ENCODE measurements at regions of chr10 and their contacts with region 1.

Region 1: GRCh38 chr10:101782811-101783735 is at the start of gene NPM3:
- DNase-seq: peak; percentile 56 to 66
- H3K4me3 ChIP-seq: peak within 1 kb of the TSS; percentile 88
- H3K27ac ChIP-seq: no peak within 1 kb of the TSS
- H3K4me1 ChIP-seq: peaks cover 11% of the 10 kb centered on the region; the same call in 1 of the 2 replicates
- H3K27me3 ChIP-seq: no peaks in the 10 kb centered on the region
- CTCF ChIP-seq: no peak
- total RNA-seq, gene NPM3: 36.1 and 43.6 TPM in 2 replicates

Region 2: DNA sequence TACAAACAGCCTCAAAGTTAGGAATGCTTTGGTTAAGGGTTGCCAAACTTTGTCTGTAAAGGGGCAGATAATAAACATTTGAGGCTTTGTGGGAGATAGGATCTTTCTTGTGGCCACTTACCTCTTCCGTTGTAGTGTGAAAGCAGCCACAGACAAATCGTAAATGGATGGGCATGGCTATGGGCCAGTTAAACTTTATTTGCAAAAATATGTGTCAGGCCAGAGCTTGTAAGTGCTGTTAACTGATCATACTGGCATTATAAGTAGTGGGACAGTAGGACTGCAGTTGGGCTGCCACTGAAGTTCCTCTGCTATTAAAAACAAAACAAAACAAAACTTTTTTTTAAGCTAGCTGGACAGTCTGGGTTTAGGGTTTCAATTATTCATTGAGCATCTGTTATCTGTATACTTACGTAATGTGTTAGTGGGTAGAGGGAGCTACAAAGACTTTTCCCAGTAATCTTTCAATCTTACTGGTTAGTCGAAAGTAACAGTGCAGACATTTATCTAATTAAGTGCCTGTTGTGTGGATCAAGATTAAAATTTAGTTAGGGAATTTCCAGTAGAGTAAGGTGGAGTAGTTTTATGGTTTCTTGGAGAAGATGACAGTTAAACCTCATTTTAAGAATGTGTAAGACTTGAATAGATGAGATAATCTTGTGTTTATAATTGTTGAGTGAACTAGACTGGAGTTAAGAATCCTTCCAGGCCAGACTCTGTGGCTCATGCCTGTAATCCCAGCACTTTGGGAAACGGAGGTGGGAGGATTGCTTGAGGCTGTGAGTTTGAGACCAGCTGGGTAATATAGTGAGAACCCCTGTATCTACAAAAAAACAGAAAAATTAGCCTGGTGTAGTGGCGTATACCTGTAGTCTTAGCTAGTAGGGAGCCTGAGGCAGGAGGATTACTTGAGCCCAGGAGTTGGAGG is 329.0 kb before region 1 on chr10:
- CTCF ChIA-PET with region 1: no interaction called
- POLR2A ChIA-PET with region 1: interaction called, 3 read pairs
- intact Hi-C with region 1: loop called (anchors 10 kb)
- DNase-seq: no peak
- H3K4me3 ChIP-seq: no peak overlapping the region
- H3K27ac ChIP-seq: no peak overlapping the region
- H3K4me1 ChIP-seq: no peaks in the 10 kb centered on the region
- H3K27me3 ChIP-seq: no peaks in the 10 kb centered on the region
- CTCF ChIP-seq: no peak

Region 3: DNA sequence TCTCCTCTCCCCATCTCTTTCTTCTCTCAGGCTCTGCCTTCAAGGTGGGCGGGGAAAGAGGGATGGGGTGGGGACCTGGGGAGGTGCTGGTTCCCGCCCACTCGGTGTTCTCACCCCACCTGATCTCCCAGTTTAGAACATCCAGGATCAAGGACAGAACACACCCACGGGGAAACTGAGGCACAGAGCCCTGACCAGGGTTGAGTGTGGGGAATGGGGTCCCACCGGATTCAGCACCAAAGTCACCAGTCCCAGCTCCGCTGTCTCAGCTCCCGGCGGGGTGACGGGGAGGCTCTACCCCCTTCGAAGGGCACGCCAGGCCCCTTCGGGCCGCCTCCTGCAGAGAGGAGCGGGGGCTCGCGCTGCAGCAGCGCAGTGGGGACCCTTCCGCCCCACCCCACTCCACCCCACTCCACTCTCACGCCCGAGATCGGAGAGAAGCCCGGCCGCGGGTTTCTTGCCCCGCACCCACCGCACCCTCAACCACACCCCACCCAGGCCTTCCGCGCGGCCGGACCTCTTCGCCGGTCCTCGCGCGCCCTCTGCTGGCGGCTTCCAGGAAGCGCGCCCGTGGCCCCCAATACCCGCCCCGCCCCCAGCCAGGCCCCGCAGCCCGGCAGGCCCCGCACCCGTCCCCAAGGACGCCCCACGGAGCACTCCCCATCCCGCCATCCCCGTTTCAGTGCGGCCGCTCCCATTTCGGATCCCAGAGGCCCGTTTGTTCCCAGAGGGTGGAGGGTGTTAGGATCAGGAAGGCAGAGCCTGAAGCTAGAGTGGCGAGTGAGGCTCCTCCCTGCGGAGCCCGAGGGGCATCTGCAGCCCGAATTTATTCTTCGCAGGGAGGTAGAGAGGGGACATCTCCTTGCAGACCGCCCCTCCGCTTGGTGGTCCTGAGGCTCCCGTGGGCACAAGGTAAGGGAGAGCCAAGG is 213.0 kb before region 1 on chr10:
- CTCF ChIA-PET with region 1: interaction called, 14 read pairs
- POLR2A ChIA-PET with region 1: no interaction called
- intact Hi-C with region 1: no loop called
- DNase-seq: peak in 1 of 2 experiments; percentile 58
- H3K4me3 ChIP-seq: peak overlapping the region; percentile 68
- H3K27ac ChIP-seq: no peak overlapping the region
- H3K4me1 ChIP-seq: no peaks in the 10 kb centered on the region
- H3K27me3 ChIP-seq: peaks cover 15% of the 10 kb centered on the region
- CTCF ChIP-seq: peak; percentile 78

Region 4: GRCh38 chr10:101576211-101576863 is 206.7 kb before region 1 on chr10:
- CTCF ChIA-PET with region 1: interaction called, 10 read pairs
- POLR2A ChIA-PET with region 1: no interaction called
- intact Hi-C with region 1: no loop called
- DNase-seq: peak in 1 of 2 experiments; percentile 36
- H3K4me3 ChIP-seq: no peak overlapping the region
- H3K27ac ChIP-seq: no peak overlapping the region
- H3K4me1 ChIP-seq: no peaks in the 10 kb centered on the region
- H3K27me3 ChIP-seq: no peaks in the 10 kb centered on the region
- CTCF ChIP-seq: no peak

Region 5: GRCh38 chr10:101602761-101603398 is 180.2 kb before region 1 on chr10:
- CTCF ChIA-PET with region 1: interaction called, 19 read pairs
- POLR2A ChIA-PET with region 1: interaction called, 3 read pairs
- intact Hi-C with region 1: loop called (anchors 1 kb)
- DNase-seq: peak; percentile 58 to 69
- H3K4me3 ChIP-seq: no peak overlapping the region
- H3K27ac ChIP-seq: no peak overlapping the region
- H3K4me1 ChIP-seq: no peaks in the 10 kb centered on the region
- H3K27me3 ChIP-seq: no peaks in the 10 kb centered on the region
- CTCF ChIP-seq: peak; percentile 82

Region 6: GRCh38 chr10:101693978-101694673 is 88.9 kb before region 1 on chr10:
- CTCF ChIA-PET with region 1: no interaction called
- POLR2A ChIA-PET with region 1: no interaction called
- intact Hi-C with region 1: loop called (anchors 10 kb)
- DNase-seq: peak in 1 of 2 experiments; percentile 48
- H3K4me3 ChIP-seq: peak overlapping the region; percentile 90
- H3K27ac ChIP-seq: peak overlapping the region; percentile 74
- H3K4me1 ChIP-seq: peaks cover 19% of the 10 kb centered on the region
- H3K27me3 ChIP-seq: no peaks in the 10 kb centered on the region
- CTCF ChIP-seq: no peak

Region 7: DNA sequence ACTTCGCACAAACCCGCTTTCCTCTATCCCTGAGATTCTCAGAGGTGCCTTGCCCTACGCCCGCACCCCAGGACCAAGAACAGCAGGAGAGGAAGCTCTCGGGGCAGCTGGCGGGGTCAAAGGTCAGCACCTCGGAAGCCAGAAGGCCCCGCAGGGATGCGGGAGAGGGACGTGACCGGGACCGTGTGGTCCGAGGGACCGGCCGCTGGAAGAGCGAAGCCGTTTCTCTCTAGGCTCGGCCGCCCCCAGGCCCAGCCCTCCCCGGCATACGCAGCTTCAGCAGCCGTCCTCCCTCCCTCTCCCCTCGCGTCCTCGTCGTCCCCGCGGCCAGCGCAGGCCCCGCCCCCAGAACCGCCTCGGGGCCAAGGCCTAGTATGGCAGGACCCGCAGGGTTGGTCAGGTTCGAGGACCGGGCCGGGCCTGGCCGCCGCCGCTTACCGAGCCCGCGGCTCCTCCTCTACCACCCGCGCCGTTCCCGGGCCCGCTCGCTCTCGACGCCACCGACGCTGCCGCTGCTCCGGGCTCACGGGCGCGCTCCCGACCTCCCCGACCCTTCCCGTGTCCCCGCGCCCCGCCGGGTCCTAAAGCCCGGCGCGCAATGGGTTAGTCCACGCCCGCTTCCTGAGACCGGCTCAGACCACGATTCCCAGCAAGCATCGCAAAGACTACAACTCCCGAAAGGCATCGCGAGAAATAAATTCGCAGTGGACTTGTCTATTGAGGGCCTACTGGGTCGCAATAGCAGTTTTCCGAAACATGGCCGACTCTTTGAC is 272.8 kb after region 1 on chr10 and contains the start of gene ARMH3:
- CTCF ChIA-PET with region 1: interaction called, 10 read pairs
- POLR2A ChIA-PET with region 1: no interaction called
- intact Hi-C with region 1: no loop called
- DNase-seq: peak; percentile 86 to 87
- H3K4me3 ChIP-seq: peak within 1 kb of the TSS; percentile 84
- H3K27ac ChIP-seq: 0 out of 2 replicates have a peak within 1 kb of the TSS, but pooled peaks have one; percentile 19
- H3K4me1 ChIP-seq: 0 out of 2 replicates have a peak, but pooled peaks cover 7% of the 10 kb centered on the region
- H3K27me3 ChIP-seq: no peaks in the 10 kb centered on the region
- CTCF ChIP-seq: no peak
- total RNA-seq, gene ARMH3: 12.0 and 12.8 TPM in 2 replicates

Measured in PC-9 (cell line).